SK-N-SH (cell line): ENCODE measurements at regions of chr17 and their contacts with region 1.

Region 1: DNA sequence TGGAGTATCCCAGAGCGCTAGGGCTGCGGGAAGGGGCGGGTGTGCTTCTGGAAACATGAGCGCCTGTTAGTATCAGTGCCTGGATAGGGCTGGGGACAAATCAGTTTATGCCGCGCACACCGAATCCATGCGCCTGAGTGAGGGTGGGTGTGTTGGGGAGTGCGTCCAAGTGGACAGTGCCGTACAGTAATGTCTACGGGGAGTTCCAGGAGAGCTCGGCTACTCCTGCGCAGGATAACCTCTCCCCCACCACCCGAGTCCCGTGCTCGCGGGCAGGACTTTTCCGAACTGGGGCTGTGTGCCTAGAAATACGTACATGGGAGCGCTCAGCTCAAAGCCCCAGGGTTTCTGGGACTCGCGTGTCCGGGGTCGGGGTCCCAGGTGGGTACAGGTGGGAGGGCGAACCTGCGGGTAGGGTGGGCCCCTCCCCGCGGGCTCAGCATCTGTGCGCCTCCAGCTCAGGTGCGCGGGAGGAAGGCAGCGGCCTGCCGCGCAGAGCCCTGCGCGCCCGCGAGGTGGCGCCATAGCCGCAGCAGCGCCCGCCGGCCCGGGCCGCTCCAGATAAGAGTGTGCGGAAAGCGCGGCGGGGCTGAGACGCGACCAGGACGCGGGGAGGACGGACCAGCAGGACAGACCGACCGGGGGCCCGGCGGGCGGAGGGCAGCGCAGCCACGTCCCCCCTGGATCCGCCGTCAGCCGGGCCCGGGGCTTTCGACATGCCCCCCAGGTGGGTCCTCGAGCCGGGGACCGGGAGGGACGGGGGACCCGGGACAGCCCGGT is at the start of gene HIC1:
- DNase-seq: peak; percentile 93
- H3K4me3 ChIP-seq: peak within 1 kb of the TSS; percentile 57 to 62
- H3K27ac ChIP-seq: peak within 1 kb of the TSS in 1 of 2 experiments; percentile 55; a peak in 1 of 4 replicates
- H3K4me1 ChIP-seq: peaks cover 0 to 6% of the 10 kb centered on the region in 2 experiments; a peak in 1 of 4 replicates
- H3K27me3 ChIP-seq: no peaks in the 10 kb centered on the region
- CTCF ChIP-seq: peak; percentile 72
- EP300 ChIP-seq: no peak; a peak in 1 of 4 replicates
- RAD21 ChIP-seq: peak; percentile 88
- polyA plus RNA-seq, gene HIC1: 3.8 and 6.4 TPM in 2 replicates

Region 2: GRCh38 chr17:2075336-2076086 is 20.8 kb after region 1 on chr17:
- CTCF ChIA-PET with region 1: interaction called, 28 read pairs
- POLR2A ChIA-PET with region 1: interaction called, 3 read pairs
- DNase-seq: peak; percentile 78
- H3K4me3 ChIP-seq: no peak overlapping the region
- H3K27ac ChIP-seq: peak overlapping the region in 1 of 2 experiments; percentile 95; a peak in 2 of 4 replicates
- H3K4me1 ChIP-seq: peaks cover 0 to 46% of the 10 kb centered on the region in 2 experiments; a peak in 1 of 4 replicates
- H3K27me3 ChIP-seq: no peaks in the 10 kb centered on the region
- CTCF ChIP-seq: no peak
- EP300 ChIP-seq: peak in 1 of 2 experiments; percentile 44; a peak in 1 of 4 replicates
- RAD21 ChIP-seq: peak; percentile 30; the same call in 1 of the 2 replicates

Region 3: DNA sequence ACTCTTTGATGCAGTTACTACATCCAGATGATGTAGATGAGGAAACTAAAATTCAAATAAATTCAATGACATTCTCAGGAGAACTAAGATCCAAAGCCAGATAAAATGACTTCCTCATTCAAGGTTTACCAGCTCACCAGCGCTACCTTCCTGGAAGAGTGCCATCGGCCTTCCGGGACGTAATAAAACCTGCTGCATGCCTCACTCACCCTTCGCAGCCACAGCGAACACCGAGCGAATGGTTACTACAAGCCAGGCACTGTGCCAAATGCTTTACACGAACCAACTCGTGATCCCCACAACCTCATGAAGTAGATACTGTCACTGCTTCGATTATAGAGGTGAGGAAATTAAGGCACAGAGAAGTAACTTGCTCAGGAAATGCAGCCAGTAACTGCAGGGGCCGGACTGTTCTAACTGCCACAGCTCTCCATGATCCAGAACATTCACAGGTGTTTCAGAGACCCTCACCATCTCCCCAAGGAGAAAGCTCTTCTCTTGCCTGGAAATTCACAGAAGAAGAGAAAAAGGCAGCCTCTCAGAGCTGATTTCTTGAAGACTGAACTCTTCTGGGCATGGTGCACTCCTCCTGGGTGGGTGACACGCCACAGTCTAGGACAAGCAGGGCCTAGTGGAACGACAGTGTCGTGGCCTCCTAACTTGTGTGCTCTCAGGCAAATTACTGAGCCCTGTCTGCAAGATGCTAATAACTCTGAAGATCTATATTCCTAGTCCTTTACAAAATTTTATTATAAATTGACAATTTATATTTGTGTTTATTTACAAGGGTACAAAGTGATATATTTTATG is 47.0 kb after region 1 on chr17:
- CTCF ChIA-PET with region 1: interaction called, 10 read pairs
- POLR2A ChIA-PET with region 1: no interaction called
- DNase-seq: no peak
- H3K4me3 ChIP-seq: no peak overlapping the region
- H3K27ac ChIP-seq: 0 out of 4 replicates have a peak overlapping the region, but pooled peaks of 1 of the 2 experiments have one; percentile 6
- H3K4me1 ChIP-seq: peaks cover 5 to 11% of the 10 kb centered on the region in 2 experiments; a peak in 1 of 4 replicates
- H3K27me3 ChIP-seq: no peaks in the 10 kb centered on the region
- CTCF ChIP-seq: no peak
- EP300 ChIP-seq: no peak
- RAD21 ChIP-seq: no peak

Region 4: GRCh38 chr17:2174468-2175293 is 120.0 kb after region 1 on chr17:
- CTCF ChIA-PET with region 1: interaction called, 20 read pairs
- POLR2A ChIA-PET with region 1: no interaction called
- DNase-seq: peak; percentile 60
- H3K4me3 ChIP-seq: no peak overlapping the region
- H3K27ac ChIP-seq: peak overlapping the region; percentile 91 to 98
- H3K4me1 ChIP-seq: peaks cover 61 to 75% of the 10 kb centered on the region in 2 experiments
- H3K27me3 ChIP-seq: no peaks in the 10 kb centered on the region
- CTCF ChIP-seq: no peak; the same call in 1 of the 2 replicates
- EP300 ChIP-seq: peak in 1 of 2 experiments; percentile 58; a peak in 2 of 4 replicates
- RAD21 ChIP-seq: no peak

Region 5: GRCh38 chr17:2222901-2223616 is 168.4 kb after region 1 on chr17:
- CTCF ChIA-PET with region 1: interaction called, 36 read pairs
- POLR2A ChIA-PET with region 1: no interaction called
- DNase-seq: no peak
- H3K4me3 ChIP-seq: no peak overlapping the region
- H3K27ac ChIP-seq: peak overlapping the region in 1 of 2 experiments; percentile 24; a peak in 1 of 4 replicates
- H3K4me1 ChIP-seq: peaks cover 7 to 15% of the 10 kb centered on the region in 2 experiments; a peak in 3 of 4 replicates
- H3K27me3 ChIP-seq: no peaks in the 10 kb centered on the region
- CTCF ChIP-seq: no peak
- EP300 ChIP-seq: no peak
- RAD21 ChIP-seq: no peak

Region 6: GRCh38 chr17:2253768-2254406 is 199.2 kb after region 1 on chr17:
- CTCF ChIA-PET with region 1: interaction called, 46 read pairs
- POLR2A ChIA-PET with region 1: no interaction called
- DNase-seq: no peak
- H3K4me3 ChIP-seq: no peak overlapping the region
- H3K27ac ChIP-seq: no peak overlapping the region
- H3K4me1 ChIP-seq: peaks cover 2 to 23% of the 10 kb centered on the region in 2 experiments; a peak in 2 of 4 replicates
- H3K27me3 ChIP-seq: no peaks in the 10 kb centered on the region
- CTCF ChIP-seq: no peak
- EP300 ChIP-seq: no peak
- RAD21 ChIP-seq: no peak